ENCODE measurements at regions of chr17 and their contacts with region 1.

Region 1: DNA sequence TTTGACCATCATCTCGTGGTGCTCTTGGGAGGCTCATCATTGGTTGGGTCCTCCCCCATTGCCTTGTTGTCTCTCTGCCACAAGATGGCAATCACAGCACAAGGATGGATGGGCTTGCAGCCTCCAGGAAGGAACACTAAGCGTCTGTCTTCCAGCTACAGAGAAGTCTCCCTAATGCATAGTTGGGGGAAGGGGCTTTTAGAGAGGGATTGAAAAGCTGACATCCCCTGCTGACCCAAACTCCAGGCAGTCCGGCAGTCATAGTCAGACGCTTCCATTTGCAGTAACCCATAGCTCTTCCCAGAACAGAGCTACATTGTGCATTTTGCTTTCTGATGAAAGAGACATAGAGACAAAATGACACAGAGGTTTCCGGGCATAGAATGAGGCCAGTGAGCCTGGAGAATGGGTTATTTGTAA is 111.4 kb downstream of the UTP18 start:
- H3K4me3 Mint-ChIP-seq: peak overlapping the region; percentile 13
- H3K27ac Mint-ChIP-seq: peak overlapping the region; percentile 70
- H3K4me1 Mint-ChIP-seq: peaks cover 46% of the 10 kb centered on the region
- H3K27me3 Mint-ChIP-seq: peaks cover 14% of the 10 kb centered on the region

Region 2: GRCh38 chr17:51435641-51436091 is 63.9 kb after region 1 on chr17:
- intact Hi-C with region 1: loop called (anchors 10 kb)
- H3K4me3 Mint-ChIP-seq: peak overlapping the region; percentile 36
- H3K27ac Mint-ChIP-seq: peak overlapping the region; percentile 55
- H3K4me1 Mint-ChIP-seq: peaks cover 28% of the 10 kb centered on the region
- H3K27me3 Mint-ChIP-seq: peaks cover 1% of the 10 kb centered on the region

Region 3: DNA sequence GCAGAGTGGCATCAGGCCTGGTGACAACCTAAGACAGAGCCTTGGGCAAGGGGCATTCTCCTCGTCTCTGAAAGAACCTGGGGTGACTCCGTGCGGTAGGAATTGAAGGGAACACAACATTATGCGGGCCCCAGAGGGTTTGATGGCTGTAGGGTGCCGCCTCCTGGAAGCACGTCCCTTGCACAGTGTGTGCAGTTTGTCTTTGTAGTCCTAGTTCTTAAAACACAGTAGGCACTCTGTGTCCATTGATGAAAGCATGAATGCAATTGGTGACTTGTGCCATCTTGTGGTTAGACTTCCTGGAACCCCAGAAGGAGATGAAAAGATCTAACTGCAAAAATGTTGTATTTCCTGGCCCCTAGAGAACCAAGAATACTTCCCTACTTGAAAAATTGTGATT is 168.4 kb after region 1 on chr17:
- intact Hi-C with region 1: loop called (anchors 1 kb)
- H3K4me3 Mint-ChIP-seq: no peak overlapping the region
- H3K27ac Mint-ChIP-seq: no peak overlapping the region
- H3K4me1 Mint-ChIP-seq: no peaks in the 10 kb centered on the region
- H3K27me3 Mint-ChIP-seq: no peaks in the 10 kb centered on the region

Region 4: DNA sequence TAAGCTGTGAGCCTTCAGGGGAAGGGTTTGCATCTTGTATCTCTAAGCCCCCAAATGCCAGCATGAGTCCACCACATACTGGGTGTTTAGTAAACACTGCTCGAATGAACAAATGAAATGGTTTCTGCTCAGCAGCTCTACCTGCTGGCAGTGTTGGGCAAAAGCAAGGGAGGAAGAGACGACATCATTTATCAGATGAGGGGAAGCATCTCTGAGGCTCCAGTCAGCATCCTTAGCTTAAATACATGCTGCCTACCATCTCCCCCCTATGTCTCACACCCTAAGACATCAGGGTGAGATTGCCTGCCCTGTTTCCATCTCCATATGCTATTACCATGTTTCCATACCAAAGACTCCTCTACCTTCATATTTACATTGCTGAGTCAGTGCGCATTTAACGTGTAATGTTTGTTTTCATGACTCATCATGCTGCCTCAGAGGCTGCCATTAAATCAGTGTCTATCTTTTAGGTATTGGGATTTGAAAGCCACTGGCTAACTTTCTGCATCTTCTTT is 268.4 kb after region 1 on chr17:
- intact Hi-C with region 1: loop called (anchors 2 kb)
- H3K4me3 Mint-ChIP-seq: no peak overlapping the region
- H3K27ac Mint-ChIP-seq: no peak overlapping the region
- H3K4me1 Mint-ChIP-seq: no peaks in the 10 kb centered on the region
- H3K27me3 Mint-ChIP-seq: peaks cover 7% of the 10 kb centered on the region

Region 5: GRCh38 chr17:51764387-51764972 is 392.7 kb after region 1 on chr17:
- intact Hi-C with region 1: loop called (anchors 10 kb)
- H3K4me3 Mint-ChIP-seq: no peak overlapping the region
- H3K27ac Mint-ChIP-seq: no peak overlapping the region
- H3K4me1 Mint-ChIP-seq: no peaks in the 10 kb centered on the region
- H3K27me3 Mint-ChIP-seq: peaks cover 3% of the 10 kb centered on the region

Region 6: GRCh38 chr17:52106638-52107261 is 735.0 kb after region 1 on chr17:
- intact Hi-C with region 1: loop called (anchors 5 kb)
- H3K4me3 Mint-ChIP-seq: no peak overlapping the region
- H3K27ac Mint-ChIP-seq: no peak overlapping the region
- H3K4me1 Mint-ChIP-seq: no peaks in the 10 kb centered on the region
- H3K27me3 Mint-ChIP-seq: no peaks in the 10 kb centered on the region

Measured in dendritic cell treated with granulocyte-macrophage colony-stimulating factor and Interleukin-4, amounts not matched to agents 40 ng/mL and 50 ng/mL, for 4 days (primary cell).